B cell (primary cell): ENCODE measurements at regions of chr17 and their contacts with region 1.

Region 1: GRCh38 chr17:13017659-13018459 is at the start of gene ELAC2:
- DNase-seq: peak; percentile 97
- ATAC-seq: peak; percentile 99
- H3K4me3 ChIP-seq: peak within 1 kb of the TSS; percentile 62 to 98 (median 75)
- H3K4me3 Mint-ChIP-seq: peak within 1 kb of the TSS; percentile 97
- H3K27ac ChIP-seq: peak within 1 kb of the TSS; percentile 69 to 80
- H3K27ac Mint-ChIP-seq: peak within 1 kb of the TSS; percentile 91
- H3K4me1 ChIP-seq: peaks cover 12 to 13% of the 10 kb centered on the region in 2 donors
- H3K4me1 Mint-ChIP-seq: peaks cover 20% of the 10 kb centered on the region
- H3K27me3 ChIP-seq: no peaks in the 10 kb centered on the region
- H3K27me3 Mint-ChIP-seq: no peaks in the 10 kb centered on the region
- CTCF ChIP-seq: peak; percentile 20
- total RNA-seq, gene ELAC2: 79.0 and 79.4 TPM in 2 replicates

Region 2: DNA sequence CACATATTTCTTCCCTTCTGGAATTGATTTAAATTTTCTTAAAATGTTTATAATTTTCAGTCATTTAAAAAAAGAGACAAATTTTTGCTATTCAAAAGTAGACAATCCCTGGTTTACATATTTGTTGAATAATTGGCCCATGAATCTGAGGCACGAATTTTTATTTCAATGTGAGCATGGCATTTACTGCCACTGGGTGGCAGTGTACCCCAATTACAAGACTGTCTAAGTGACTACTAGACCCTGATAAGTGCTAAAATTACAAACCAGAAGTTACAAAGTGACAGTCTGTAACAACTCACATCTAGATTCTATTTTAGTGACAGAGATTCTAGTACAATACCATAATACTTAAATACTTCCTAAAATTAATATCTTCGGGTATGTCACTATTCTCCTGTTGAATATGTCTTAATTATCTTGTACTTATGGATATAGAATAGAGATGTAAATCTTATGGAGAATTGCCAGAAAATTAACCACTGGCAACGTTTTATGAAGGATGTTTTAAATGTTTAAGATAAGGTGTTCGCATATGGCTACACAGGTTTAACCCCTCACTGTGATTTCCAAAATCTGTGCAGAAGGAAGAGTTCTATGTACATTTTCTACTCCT is 761.4 kb before region 1 on chr17:
- CTCF ChIA-PET with region 1: no interaction called
- POLR2A ChIA-PET with region 1: no interaction called
- intact Hi-C with region 1: loop called (anchors 5 kb)
- DNase-seq: peak; percentile 37
- ATAC-seq: peak; percentile 51
- H3K4me3 ChIP-seq: no peak overlapping the region
- H3K4me3 Mint-ChIP-seq: no peak overlapping the region
- H3K27ac ChIP-seq: no peak overlapping the region
- H3K27ac Mint-ChIP-seq: no peak overlapping the region
- H3K4me1 ChIP-seq: no peaks in the 10 kb centered on the region
- H3K4me1 Mint-ChIP-seq: no peaks in the 10 kb centered on the region
- H3K27me3 ChIP-seq: no peaks in the 10 kb centered on the region
- H3K27me3 Mint-ChIP-seq: peaks cover 3% of the 10 kb centered on the region
- CTCF ChIP-seq: peak; percentile 73

Region 3: DNA sequence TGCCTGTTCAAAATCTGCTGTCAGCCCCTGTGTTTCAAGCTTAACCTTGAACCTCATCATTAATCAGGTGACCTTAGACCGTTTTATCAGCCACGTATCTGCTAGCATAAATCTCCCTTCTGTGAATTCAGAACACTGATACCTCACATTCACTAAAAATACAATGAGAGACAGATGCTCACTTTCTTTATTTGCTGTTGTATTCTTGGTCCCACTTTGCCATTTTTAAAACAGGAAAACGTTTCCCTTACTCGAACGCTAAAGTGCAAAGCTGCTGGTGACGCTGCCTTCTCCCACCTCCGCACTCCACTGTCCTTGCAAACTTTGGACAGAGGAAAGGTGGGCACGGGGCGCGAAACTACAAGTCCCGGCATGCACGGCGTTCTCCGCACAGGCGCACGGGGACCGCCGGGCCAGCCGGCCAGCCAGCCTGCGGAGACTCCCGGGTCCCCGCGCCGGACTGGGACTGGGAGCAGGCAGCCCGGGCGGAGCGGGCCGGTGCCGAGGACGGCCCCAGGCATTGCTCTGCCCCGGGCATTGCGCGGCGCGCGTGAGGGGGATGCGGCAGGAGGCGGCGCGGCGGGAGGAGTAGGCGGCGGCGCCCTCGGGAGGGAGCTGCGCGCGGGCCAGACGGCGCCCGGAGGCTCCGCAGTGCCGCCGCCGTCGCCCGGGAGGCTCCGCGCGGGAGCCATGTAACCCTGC is 228.6 kb before region 1 on chr17 and contains the start of gene ARHGAP44:
- CTCF ChIA-PET with region 1: no interaction called
- POLR2A ChIA-PET with region 1: no interaction called
- intact Hi-C with region 1: loop called (anchors 10 kb)
- DNase-seq: peak; percentile 59
- ATAC-seq: peak; percentile 81
- H3K4me3 ChIP-seq: peak within 1 kb of the TSS in 4 of 5 experiments; percentile 31 to 60 (median 47)
- H3K4me3 Mint-ChIP-seq: peak within 1 kb of the TSS; percentile 87
- H3K27ac ChIP-seq: no peak within 1 kb of the TSS
- H3K27ac Mint-ChIP-seq: peak within 1 kb of the TSS; percentile 29
- H3K4me1 ChIP-seq: peaks cover 10 to 11% of the 10 kb centered on the region in 2 donors
- H3K4me1 Mint-ChIP-seq: peaks cover 10% of the 10 kb centered on the region
- H3K27me3 ChIP-seq: peaks cover 0 to 29% (median 7%) of the 10 kb centered on the region in 4 experiments
- H3K27me3 Mint-ChIP-seq: peaks cover 32% of the 10 kb centered on the region
- CTCF ChIP-seq: no peak
- total RNA-seq, gene ARHGAP44: 11.6 and 15.2 TPM in 2 replicates

Region 4: GRCh38 chr17:13031718-13032350 is 14.0 kb after region 1 on chr17:
- CTCF ChIA-PET with region 1: interaction called, 180 read pairs
- POLR2A ChIA-PET with region 1: no interaction called
- intact Hi-C with region 1: loop called (anchors 1 kb)
- DNase-seq: peak; percentile 68
- ATAC-seq: peak; percentile 73
- H3K4me3 ChIP-seq: peak overlapping the region in 2 of 5 experiments; percentile 27 to 36
- H3K4me3 Mint-ChIP-seq: peak overlapping the region; percentile 66
- H3K27ac ChIP-seq: no peak overlapping the region
- H3K27ac Mint-ChIP-seq: no peak overlapping the region
- H3K4me1 ChIP-seq: peaks cover 0 to 5% of the 10 kb centered on the region in 2 donors
- H3K4me1 Mint-ChIP-seq: peaks cover 6% of the 10 kb centered on the region
- H3K27me3 ChIP-seq: peaks cover 0 to 3% (median 0%) of the 10 kb centered on the region in 4 experiments
- H3K27me3 Mint-ChIP-seq: peaks cover 19% of the 10 kb centered on the region
- CTCF ChIP-seq: peak; percentile 86

Region 5: DNA sequence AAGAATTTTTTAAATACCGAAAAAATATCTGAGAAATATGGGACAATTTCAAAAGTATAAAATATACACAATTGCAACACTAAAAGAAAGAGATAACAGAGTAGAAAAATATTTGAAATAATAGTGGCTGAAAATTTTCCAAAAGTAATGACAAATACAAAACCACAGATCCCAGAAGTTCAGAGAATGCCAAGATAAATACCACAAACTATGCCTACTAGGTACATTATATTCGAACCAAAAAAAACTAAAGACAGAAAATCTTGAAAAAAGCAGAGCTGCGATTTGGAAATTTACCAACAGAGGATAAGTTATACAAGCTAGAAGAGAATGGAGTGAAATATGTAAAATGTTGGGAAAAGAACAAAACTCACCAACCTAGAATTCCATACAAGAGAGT is 191.2 kb after region 1 on chr17:
- CTCF ChIA-PET with region 1: no interaction called
- POLR2A ChIA-PET with region 1: no interaction called
- intact Hi-C with region 1: no loop called
- DNase-seq: no peak
- ATAC-seq: no peak
- H3K4me3 ChIP-seq: no peak overlapping the region
- H3K4me3 Mint-ChIP-seq: no peak overlapping the region
- H3K27ac ChIP-seq: no peak overlapping the region
- H3K27ac Mint-ChIP-seq: no peak overlapping the region
- H3K4me1 ChIP-seq: no peaks in the 10 kb centered on the region
- H3K4me1 Mint-ChIP-seq: no peaks in the 10 kb centered on the region
- H3K27me3 ChIP-seq: no peaks in the 10 kb centered on the region
- H3K27me3 Mint-ChIP-seq: no peaks in the 10 kb centered on the region
- CTCF ChIP-seq: no peak

Region 6: GRCh38 chr17:13544292-13544691 is 526.4 kb after region 1 on chr17:
- CTCF ChIA-PET with region 1: no interaction called
- POLR2A ChIA-PET with region 1: no interaction called
- intact Hi-C with region 1: no loop called
- DNase-seq: no peak
- ATAC-seq: no peak
- H3K4me3 ChIP-seq: no peak overlapping the region
- H3K4me3 Mint-ChIP-seq: no peak overlapping the region
- H3K27ac ChIP-seq: no peak overlapping the region
- H3K27ac Mint-ChIP-seq: no peak overlapping the region
- H3K4me1 ChIP-seq: no peaks in the 10 kb centered on the region
- H3K4me1 Mint-ChIP-seq: no peaks in the 10 kb centered on the region
- H3K27me3 ChIP-seq: no peaks in the 10 kb centered on the region
- H3K27me3 Mint-ChIP-seq: peaks cover under 1% of the 10 kb centered on the region
- CTCF ChIP-seq: no peak